T-cell (primary cell): ENCODE measurements at regions of chr7 and their contacts with region 1.

Region 1: GRCh38 chr7:128425850-128426249 is 16.1 kb upstream of the IMPDH1 start:
- DNase-seq: peak; percentile 28 to 85 (median 69)
- ATAC-seq: peak; percentile 61 to 86 (median 80)
- H3K4me3 ChIP-seq: no peak overlapping the region
- H3K4me3 Mint-ChIP-seq: no peak overlapping the region
- H3K27ac ChIP-seq: no peak overlapping the region
- H3K27ac Mint-ChIP-seq: no peak overlapping the region
- H3K4me1 ChIP-seq: peaks cover 0 to 28% of the 10 kb centered on the region in 2 experiments
- H3K4me1 Mint-ChIP-seq: peaks cover 0 to 7% (median 0%) of the 10 kb centered on the region in 3 donors
- H3K27me3 ChIP-seq: peaks cover 0 to 9% of the 10 kb centered on the region in 2 experiments
- H3K27me3 Mint-ChIP-seq: peaks cover 4 to 10% of the 10 kb centered on the region in 2 donors

Region 2: DNA sequence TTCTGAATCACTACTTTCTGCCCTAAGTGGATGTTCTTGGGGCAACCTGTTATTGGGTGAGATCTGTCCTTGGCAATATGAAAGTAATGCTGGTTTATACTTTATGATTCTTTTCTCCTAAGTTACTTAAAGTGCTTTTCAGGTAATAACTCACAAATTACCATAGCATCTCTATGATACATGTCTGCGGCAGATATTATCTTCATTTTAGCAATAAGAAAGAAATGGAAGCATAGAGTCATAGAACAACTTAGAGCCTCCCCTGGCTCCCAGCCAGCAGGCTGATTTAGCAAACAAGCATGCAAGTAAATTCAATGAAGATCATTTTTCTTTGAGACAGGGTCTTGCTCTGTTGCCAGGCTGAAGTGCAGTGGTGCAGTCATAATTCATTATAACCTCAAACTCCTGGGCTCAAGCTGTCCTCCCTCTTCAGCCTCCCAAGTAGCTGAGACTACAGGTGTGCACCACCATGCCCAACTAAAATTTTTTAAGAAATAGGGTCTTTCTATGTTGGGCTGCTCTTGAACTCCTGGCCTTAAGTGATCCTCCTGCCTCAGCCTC is 1135.0 kb before region 1 on chr7:
- CTCF ChIA-PET with region 1: no interaction called
- POLR2A ChIA-PET with region 1: no interaction called
- DNase-seq: no peak
- ATAC-seq: no peak
- H3K4me3 ChIP-seq: no peak overlapping the region
- H3K4me3 Mint-ChIP-seq: no peak overlapping the region
- H3K27ac ChIP-seq: no peak overlapping the region
- H3K27ac Mint-ChIP-seq: no peak overlapping the region
- H3K4me1 ChIP-seq: no peaks in the 10 kb centered on the region
- H3K4me1 Mint-ChIP-seq: no peaks in the 10 kb centered on the region
- H3K27me3 ChIP-seq: peaks cover 0 to 32% of the 10 kb centered on the region in 2 experiments
- H3K27me3 Mint-ChIP-seq: peaks cover 25 to 33% of the 10 kb centered on the region in 2 donors

Region 3: DNA sequence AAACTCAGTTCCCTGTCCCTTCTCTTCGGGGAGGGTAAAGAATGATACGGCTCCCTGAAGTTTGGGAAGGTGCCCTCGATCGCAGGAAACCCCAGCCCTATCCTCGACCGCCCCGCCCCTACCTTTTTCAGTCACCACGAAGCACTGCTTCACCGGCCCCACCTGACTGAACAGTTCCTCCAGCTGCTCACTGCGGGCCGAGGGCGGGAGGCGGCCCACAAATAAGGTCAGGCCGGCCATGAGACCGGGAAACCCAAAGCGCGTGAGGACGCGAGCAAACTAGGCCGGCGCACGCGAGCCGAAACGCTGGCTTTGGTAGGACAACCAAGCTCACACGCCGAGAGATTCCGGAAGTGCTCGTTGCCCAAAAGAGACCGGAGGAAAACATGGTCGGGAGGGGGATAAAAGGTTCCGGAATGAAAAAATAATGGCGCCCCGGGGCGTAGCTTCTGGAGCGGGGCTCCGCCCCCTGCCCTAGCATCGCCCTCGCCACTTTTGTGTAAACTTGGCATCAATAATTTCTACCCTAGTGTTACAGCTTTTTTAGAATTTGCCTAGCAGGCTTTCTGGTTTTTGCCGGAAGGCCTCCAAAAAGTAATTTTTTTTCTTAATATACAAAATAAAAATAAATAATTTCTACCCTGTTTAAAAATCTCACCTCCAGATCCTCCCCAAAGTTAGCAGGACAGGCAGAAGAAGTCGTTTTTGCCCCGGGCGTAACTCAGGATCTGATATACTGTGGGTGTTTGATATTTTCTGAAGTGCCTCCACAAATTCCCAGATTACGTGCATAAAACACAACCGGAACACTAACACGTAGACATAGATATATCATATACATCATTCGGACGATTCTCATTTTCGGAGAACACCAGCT is 82.1 kb before region 1 on chr7 and contains the start of gene RBM28:
- CTCF ChIA-PET with region 1: interaction called, 4 to 10 read pairs
- POLR2A ChIA-PET with region 1: no interaction called
- DNase-seq: peak; percentile 71 to 92 (median 81)
- ATAC-seq: peak; percentile 94 to 98 (median 96)
- H3K4me3 ChIP-seq: peak within 1 kb of the TSS; percentile 69 to 91
- H3K4me3 Mint-ChIP-seq: peak within 1 kb of the TSS; percentile 92 to 95 (median 94)
- H3K27ac ChIP-seq: peak within 1 kb of the TSS; percentile 52
- H3K27ac Mint-ChIP-seq: peak within 1 kb of the TSS; percentile 89
- H3K4me1 ChIP-seq: peaks cover 13 to 17% of the 10 kb centered on the region in 2 experiments
- H3K4me1 Mint-ChIP-seq: peaks cover 22 to 32% (median 30%) of the 10 kb centered on the region in 3 donors
- H3K27me3 ChIP-seq: peaks cover 0 to 5% of the 10 kb centered on the region in 2 experiments
- H3K27me3 Mint-ChIP-seq: peaks cover 3 to 10% of the 10 kb centered on the region in 2 donors
- total RNA-seq, gene RBM28: 27.3 to 54.3 (median 41.9) TPM

Region 4: GRCh38 chr7:128398016-128398840 is 27.6 kb before region 1 on chr7:
- CTCF ChIA-PET with region 1: interaction called, 24 to 59 read pairs
- POLR2A ChIA-PET with region 1: no interaction called
- DNase-seq: peak in 10 of 35 experiments; percentile 13 to 61 (median 32)
- ATAC-seq: peak; percentile 32 to 61 (median 53)
- H3K4me3 ChIP-seq: no peak overlapping the region
- H3K4me3 Mint-ChIP-seq: no peak overlapping the region
- H3K27ac ChIP-seq: no peak overlapping the region
- H3K27ac Mint-ChIP-seq: no peak overlapping the region
- H3K4me1 ChIP-seq: no peaks in the 10 kb centered on the region
- H3K4me1 Mint-ChIP-seq: peaks cover under 1 to 7% (median 2%) of the 10 kb centered on the region in 3 donors
- H3K27me3 ChIP-seq: no peaks in the 10 kb centered on the region
- H3K27me3 Mint-ChIP-seq: no peaks in the 10 kb centered on the region

Region 5: DNA sequence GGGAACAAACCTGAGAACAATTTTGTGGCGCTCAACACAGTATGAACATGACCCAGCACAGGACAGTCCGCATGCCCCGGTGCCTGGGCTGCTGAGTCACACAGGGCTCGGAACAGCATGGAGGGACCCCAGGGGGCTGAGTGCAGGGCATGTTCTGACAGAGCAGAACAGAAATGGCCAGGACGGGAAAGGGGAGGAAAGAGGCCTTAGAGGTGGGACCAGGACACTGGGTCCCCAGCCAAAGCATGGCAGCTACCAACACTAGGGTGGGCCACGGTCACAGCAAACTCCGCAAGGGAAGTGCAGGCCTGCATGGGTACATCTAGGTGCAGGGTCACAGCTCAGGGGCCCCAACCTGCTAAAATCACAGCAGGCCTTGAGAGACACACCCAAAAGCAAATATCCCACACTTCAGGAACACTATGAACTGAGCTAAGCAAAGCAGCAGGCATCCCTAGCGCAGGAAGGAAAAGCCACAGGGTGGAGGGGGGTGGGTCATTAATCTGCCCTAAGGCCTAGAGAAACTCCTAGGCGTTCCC is 21.6 kb before region 1 on chr7:
- CTCF ChIA-PET with region 1: interaction called, 24 to 59 read pairs
- POLR2A ChIA-PET with region 1: no interaction called
- DNase-seq: no peak
- ATAC-seq: no peak
- H3K4me3 ChIP-seq: no peak overlapping the region
- H3K4me3 Mint-ChIP-seq: peak overlapping the region; percentile 68 to 83 (median 78)
- H3K27ac ChIP-seq: no peak overlapping the region
- H3K27ac Mint-ChIP-seq: peak overlapping the region; percentile 41 to 52
- H3K4me1 ChIP-seq: peaks cover 8 to 51% of the 10 kb centered on the region in 2 experiments
- H3K4me1 Mint-ChIP-seq: peaks cover 47 to 53% (median 48%) of the 10 kb centered on the region in 3 donors
- H3K27me3 ChIP-seq: no peaks in the 10 kb centered on the region
- H3K27me3 Mint-ChIP-seq: no peaks in the 10 kb centered on the region

Region 6: DNA sequence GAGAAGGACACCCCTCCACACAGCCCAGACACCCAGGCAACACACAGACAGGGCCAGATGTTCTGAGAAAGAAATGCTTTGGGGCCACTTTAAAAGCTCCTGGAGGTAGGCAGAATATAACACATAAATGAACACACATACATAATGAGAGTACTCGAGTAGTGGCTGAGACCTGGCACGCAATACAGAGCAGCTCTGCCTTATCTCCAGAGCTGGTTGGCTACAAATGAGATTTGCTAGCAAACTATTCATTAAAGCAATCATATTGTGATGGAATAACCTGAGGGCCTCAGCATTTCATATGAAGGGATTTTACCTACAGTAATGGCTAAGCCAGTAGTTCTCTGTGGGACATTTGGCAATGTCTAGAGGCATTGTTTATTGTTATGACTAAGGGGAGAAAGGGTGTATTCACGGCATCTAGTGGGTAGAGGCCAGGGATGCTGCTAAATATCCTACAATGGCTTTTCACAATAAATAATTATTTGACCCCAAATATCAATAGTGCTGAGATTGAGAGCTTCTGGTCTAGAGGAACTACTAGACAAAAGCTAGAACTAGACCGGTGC is 10.5 kb before region 1 on chr7:
- CTCF ChIA-PET with region 1: interaction called, 11 to 37 read pairs
- POLR2A ChIA-PET with region 1: interaction called in 1 of 2 experiments, 8 read pairs
- DNase-seq: no peak
- ATAC-seq: no peak
- H3K4me3 ChIP-seq: no peak overlapping the region
- H3K4me3 Mint-ChIP-seq: no peak overlapping the region
- H3K27ac ChIP-seq: no peak overlapping the region
- H3K27ac Mint-ChIP-seq: no peak overlapping the region
- H3K4me1 ChIP-seq: peaks cover 4 to 5% of the 10 kb centered on the region in 2 experiments
- H3K4me1 Mint-ChIP-seq: peaks cover 0 to 3% (median 2%) of the 10 kb centered on the region in 3 donors
- H3K27me3 ChIP-seq: peaks cover 0 to 2% of the 10 kb centered on the region in 2 experiments
- H3K27me3 Mint-ChIP-seq: peaks cover 0 to 5% of the 10 kb centered on the region in 2 donors

Region 7: GRCh38 chr7:128455551-128456254 is 29.9 kb after region 1 on chr7 and contains the start of gene HILPDA:
- CTCF ChIA-PET with region 1: interaction called, 107 to 246 read pairs
- POLR2A ChIA-PET with region 1: interaction called, 4 read pairs
- DNase-seq: peak; percentile 82 to 98 (median 90)
- ATAC-seq: peak; percentile 90 to 98 (median 96)
- H3K4me3 ChIP-seq: peak within 1 kb of the TSS; percentile 81 to 82
- H3K4me3 Mint-ChIP-seq: peak within 1 kb of the TSS; percentile 85 to 92 (median 91)
- H3K27ac ChIP-seq: peak within 1 kb of the TSS; percentile 88
- H3K27ac Mint-ChIP-seq: peak within 1 kb of the TSS; percentile 89 to 90
- H3K4me1 ChIP-seq: peaks cover 4 to 21% of the 10 kb centered on the region in 2 experiments
- H3K4me1 Mint-ChIP-seq: peaks cover 19 to 37% (median 28%) of the 10 kb centered on the region in 3 donors
- H3K27me3 ChIP-seq: peaks cover 0 to 8% of the 10 kb centered on the region in 2 experiments
- H3K27me3 Mint-ChIP-seq: no peaks in the 10 kb centered on the region
- total RNA-seq, gene HILPDA: 2.0 to 4.8 (median 3.3) TPM